IMR-90 (cell line): ENCODE measurements at regions of chr14 and their contacts with region 1.

Region 1: DNA sequence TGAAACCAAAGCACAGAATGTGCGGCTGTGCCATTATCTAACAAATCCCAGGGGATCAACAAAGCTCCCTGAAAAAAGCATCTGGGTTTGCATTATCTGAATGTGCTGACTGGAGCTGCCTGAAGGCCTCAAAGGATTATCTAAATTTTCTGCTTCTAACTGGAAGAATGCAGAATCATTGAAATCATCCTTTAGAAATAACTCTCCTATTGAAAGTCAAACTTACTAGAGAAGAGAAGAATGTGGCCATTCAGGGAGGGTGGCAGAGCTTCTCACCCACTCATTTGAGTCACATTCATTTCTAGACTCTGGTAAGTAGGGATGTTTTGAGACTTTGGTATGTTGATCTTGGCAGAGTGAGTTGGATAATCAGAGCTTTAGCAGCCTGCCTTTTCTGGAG is 220.6 kb upstream of the RGS6 start:
- DNase-seq: peak; percentile 94
- ATAC-seq: peak; percentile 83
- H3K4me3 ChIP-seq: no peak overlapping the region
- H3K27ac ChIP-seq: peak overlapping the region; percentile 94
- H3K4me1 ChIP-seq: peaks cover 23% of the 10 kb centered on the region
- H3K27me3 ChIP-seq: no peaks in the 10 kb centered on the region
- CTCF ChIP-seq: no peak
- POLR2A ChIP-seq: no peak
- RAD21 ChIP-seq: peak; percentile 11; the same call in 1 of the 2 replicates

Region 2: GRCh38 chr14:71488703-71489191 is 222.9 kb before region 1 on chr14:
- CTCF ChIA-PET with region 1: no interaction called
- POLR2A ChIA-PET with region 1: no interaction called
- dilution Hi-C with region 1: no loop called
- in situ Hi-C with region 1: no loop called
- intact Hi-C with region 1: loop called (anchors 5 kb)
- DNase-seq: peak; percentile 90
- ATAC-seq: peak; percentile 74
- H3K4me3 ChIP-seq: no peak overlapping the region
- H3K27ac ChIP-seq: no peak overlapping the region
- H3K4me1 ChIP-seq: peaks cover 22% of the 10 kb centered on the region
- H3K27me3 ChIP-seq: no peaks in the 10 kb centered on the region
- CTCF ChIP-seq: no peak
- POLR2A ChIP-seq: no peak
- RAD21 ChIP-seq: no peak

Region 3: DNA sequence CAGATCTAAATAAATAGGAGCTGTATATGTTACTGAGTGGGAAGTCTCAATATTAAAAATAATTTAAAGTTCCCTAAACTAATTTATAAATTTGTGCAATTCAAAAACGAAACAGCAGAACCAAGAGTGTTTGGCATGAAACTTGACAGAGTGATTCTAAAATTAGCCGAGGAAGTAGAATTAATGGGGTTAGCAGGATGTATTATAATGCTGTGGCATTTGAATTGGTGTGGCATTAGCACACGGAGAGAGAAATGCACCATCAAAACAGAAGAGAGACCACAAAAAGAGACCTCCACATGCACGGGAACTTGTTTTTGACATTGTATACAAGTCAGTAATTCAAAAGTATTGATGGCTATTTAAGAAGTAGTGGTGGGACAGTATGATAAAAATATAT is 145.3 kb before region 1 on chr14:
- CTCF ChIA-PET with region 1: no interaction called
- POLR2A ChIA-PET with region 1: no interaction called
- dilution Hi-C with region 1: no loop called
- in situ Hi-C with region 1: no loop called
- intact Hi-C with region 1: no loop called
- DNase-seq: no peak
- ATAC-seq: no peak
- H3K4me3 ChIP-seq: no peak overlapping the region
- H3K27ac ChIP-seq: no peak overlapping the region
- H3K4me1 ChIP-seq: no peaks in the 10 kb centered on the region
- H3K27me3 ChIP-seq: no peaks in the 10 kb centered on the region
- CTCF ChIP-seq: no peak
- POLR2A ChIP-seq: no peak
- RAD21 ChIP-seq: no peak

Region 4: DNA sequence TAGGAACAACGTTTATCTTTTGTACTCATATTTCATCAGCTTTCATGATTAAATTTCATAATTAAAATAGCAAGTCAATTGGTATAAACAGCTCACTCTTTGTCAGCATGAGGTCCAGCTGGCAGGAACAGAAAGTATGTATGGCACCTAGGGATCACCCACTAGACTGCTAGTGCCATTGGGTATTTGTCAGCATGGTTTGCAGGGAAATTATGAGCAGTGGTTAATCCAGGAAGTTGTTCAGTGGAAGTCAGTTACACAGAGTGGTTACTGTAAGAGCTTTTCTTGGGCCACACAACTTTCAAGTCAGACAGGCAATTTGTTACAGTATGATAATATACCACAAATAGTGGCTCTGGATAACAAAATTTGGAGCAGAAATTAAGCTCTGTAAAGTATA is 119.7 kb before region 1 on chr14:
- CTCF ChIA-PET with region 1: interaction called, 3 read pairs
- POLR2A ChIA-PET with region 1: no interaction called
- dilution Hi-C with region 1: no loop called
- in situ Hi-C with region 1: no loop called
- intact Hi-C with region 1: loop called (anchors 5 kb)
- DNase-seq: peak; percentile 64
- ATAC-seq: peak; percentile 72
- H3K4me3 ChIP-seq: no peak overlapping the region
- H3K27ac ChIP-seq: no peak overlapping the region
- H3K4me1 ChIP-seq: peaks cover 8% of the 10 kb centered on the region
- H3K27me3 ChIP-seq: no peaks in the 10 kb centered on the region
- CTCF ChIP-seq: no peak
- POLR2A ChIP-seq: no peak
- RAD21 ChIP-seq: no peak

Region 5: DNA sequence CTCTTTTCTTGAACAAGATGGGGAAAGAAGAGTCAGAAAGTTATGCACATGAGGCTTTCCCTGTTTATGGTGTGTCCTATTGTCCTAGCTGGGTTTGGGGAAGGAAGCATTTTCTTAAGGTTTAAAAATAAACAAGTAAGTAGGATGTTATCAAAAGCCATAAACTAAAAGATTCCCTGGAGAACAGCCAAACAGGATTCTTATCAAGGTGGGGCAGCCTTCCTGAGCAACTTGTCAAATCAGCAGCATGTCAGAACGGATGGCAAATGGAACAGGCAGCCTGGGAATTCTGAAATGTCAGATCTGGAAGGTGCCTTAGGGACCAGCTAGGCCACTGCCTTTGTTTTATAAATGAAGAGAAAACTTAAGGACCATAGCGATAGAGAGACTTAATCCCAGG is 68.5 kb after region 1 on chr14:
- CTCF ChIA-PET with region 1: no interaction called
- POLR2A ChIA-PET with region 1: no interaction called
- dilution Hi-C with region 1: no loop called
- in situ Hi-C with region 1: no loop called
- intact Hi-C with region 1: no loop called
- DNase-seq: no peak
- ATAC-seq: no peak
- H3K4me3 ChIP-seq: no peak overlapping the region
- H3K27ac ChIP-seq: no peak overlapping the region
- H3K4me1 ChIP-seq: peaks cover 3% of the 10 kb centered on the region; the same call in 1 of the 2 replicates
- H3K27me3 ChIP-seq: no peaks in the 10 kb centered on the region
- CTCF ChIP-seq: no peak
- POLR2A ChIP-seq: no peak
- RAD21 ChIP-seq: no peak